Breast epithelium (tissue), 4 donors: ENCODE measurements at regions of chr7 and their contacts with region 1.

Region 1: DNA sequence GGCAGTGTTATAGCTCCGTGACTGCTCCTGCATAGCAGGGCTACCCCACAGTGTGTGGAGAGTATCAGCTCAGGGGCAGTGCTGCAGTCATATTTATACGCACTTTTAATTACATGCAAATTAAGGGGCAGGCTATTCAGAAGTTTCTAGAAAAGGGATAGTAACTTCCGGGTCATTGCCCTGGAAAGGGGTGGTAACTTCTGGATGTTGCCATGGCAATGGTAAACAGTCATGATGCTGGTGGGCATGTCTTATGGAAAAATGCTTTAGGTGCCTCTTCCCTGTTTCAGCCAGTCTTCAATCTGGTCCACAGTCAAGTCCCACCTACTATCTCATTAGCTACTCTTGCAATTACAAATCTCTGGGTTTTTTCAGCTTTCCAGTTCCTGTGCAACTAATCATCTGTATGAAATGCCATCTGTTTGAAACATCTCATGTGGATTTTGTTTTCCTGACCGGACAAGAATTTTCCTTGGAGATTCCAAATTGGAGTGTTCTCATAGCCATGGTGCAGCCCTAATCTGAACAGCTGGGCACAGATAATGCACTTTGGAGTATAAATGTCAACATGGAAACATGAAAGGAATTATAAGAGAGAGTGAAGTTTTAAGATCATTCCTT is 41.2 kb upstream of the CALN1 start:
- DNase-seq: no peak
- H3K4me3 ChIP-seq: no peak overlapping the region
- H3K27ac ChIP-seq: no peak overlapping the region
- H3K4me1 ChIP-seq: no peaks in the 10 kb centered on the region
- H3K27me3 ChIP-seq: peaks cover 0 to 1% of the 10 kb centered on the region in 2 donors
- CTCF ChIP-seq: no peak
- POLR2A ChIP-seq: no peak

Region 2: DNA sequence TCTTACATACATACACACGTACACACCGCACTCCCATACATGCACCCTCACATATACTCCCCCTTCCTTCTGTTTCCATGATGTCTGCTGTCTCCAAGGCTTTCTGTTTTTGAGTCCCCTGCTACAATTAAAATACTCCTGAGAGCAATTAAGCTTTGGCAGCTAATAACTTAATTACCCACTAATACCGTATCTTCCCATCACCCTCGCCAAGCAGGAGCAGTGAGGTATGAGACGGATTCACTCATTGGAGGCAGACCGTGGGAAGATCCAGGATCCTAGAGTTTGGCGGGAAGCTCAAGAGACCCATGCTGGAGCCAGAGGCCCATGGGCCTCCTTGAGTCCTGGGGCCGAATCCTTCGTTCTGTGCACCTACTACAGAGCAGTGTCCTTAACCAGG is 39.5 kb before region 1 on chr7:
- intact Hi-C with region 1: loop called (anchors 2 kb)
- DNase-seq: no peak
- H3K4me3 ChIP-seq: no peak overlapping the region
- H3K27ac ChIP-seq: no peak overlapping the region
- H3K4me1 ChIP-seq: no peaks in the 10 kb centered on the region
- H3K27me3 ChIP-seq: no peaks in the 10 kb centered on the region
- CTCF ChIP-seq: no peak
- POLR2A ChIP-seq: no peak

Region 3: DNA sequence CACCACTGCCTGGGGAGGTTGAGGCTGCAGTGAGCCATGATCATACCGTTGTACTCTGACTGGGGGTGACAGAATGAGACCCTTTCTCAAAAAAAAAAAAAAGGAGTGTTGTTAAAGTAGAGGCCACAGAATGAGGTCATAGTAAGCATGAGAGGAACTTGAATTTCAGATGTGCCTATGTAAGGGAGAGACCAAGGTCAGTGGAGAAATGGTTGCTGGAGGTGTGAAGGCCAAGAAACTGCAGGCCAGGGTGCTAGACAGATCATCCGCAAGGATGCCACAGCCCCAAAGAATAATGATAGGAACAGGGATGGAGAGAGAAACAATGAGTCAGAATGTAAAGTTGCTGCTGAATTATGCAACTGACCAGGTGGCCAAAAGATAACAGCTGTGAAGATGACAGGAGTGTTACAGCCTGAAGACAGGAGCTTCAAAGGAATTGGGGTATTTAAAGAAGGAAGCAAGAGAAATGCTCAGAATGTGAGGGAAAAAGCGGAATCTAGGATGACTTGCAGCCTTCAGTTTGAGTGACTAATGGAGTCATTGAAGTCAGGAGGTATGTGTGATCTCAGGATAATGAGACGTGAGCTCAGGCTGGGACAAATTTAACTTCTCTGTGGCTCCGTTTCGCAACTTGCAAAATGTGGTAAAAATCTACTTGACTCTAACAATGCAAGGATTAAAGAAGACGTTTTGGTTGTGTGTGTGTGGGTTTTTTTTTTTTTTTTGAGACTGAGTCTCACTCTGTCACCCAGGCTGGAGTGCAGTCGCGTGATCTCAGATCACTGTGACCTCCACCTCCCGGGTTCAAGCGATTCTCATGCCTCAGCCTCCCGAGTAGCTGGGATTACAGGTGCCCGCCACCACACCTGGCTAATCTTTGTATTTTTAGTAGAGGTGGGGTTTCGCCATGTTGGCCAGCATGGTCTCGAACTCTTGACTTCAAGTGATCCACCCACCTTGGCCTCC is 352.4 kb after region 1 on chr7:
- intact Hi-C with region 1: loop called (anchors 5 kb)
- DNase-seq: no peak
- H3K4me3 ChIP-seq: no peak overlapping the region
- H3K27ac ChIP-seq: no peak overlapping the region
- H3K4me1 ChIP-seq: no peaks in the 10 kb centered on the region
- H3K27me3 ChIP-seq: no peaks in the 10 kb centered on the region
- CTCF ChIP-seq: no peak
- POLR2A ChIP-seq: no peak